Panc1 (cell line): ENCODE measurements at regions of chr2 and their contacts with region 1.

Region 1: GRCh38 chr2:44392338-44392943 is 30.7 kb downstream of the CAMKMT start:
- DNase-seq: peak; percentile 8
- ATAC-seq: no peak
- H3K4me3 ChIP-seq: no peak overlapping the region
- H3K27ac ChIP-seq: no peak overlapping the region
- H3K4me1 ChIP-seq: no peaks in the 10 kb centered on the region; the same call in 1 of the 2 replicates
- H3K27me3 ChIP-seq: no peaks in the 10 kb centered on the region
- CTCF ChIP-seq: peak; percentile 69; the same call in 1 of the 2 replicates

Region 2: GRCh38 chr2:44369392-44369791 is 23.0 kb before region 1 on chr2:
- CTCF ChIA-PET with region 1: interaction called, 16 read pairs
- POLR2A ChIA-PET with region 1: interaction called, 6 read pairs
- in situ Hi-C with region 1: no loop called
- intact Hi-C with region 1: no loop called
- DNase-seq: no peak
- ATAC-seq: no peak
- H3K4me3 ChIP-seq: no peak overlapping the region
- H3K27ac ChIP-seq: no peak overlapping the region
- H3K4me1 ChIP-seq: peaks cover 10% of the 10 kb centered on the region
- H3K27me3 ChIP-seq: no peaks in the 10 kb centered on the region
- CTCF ChIP-seq: no peak

Region 3: DNA sequence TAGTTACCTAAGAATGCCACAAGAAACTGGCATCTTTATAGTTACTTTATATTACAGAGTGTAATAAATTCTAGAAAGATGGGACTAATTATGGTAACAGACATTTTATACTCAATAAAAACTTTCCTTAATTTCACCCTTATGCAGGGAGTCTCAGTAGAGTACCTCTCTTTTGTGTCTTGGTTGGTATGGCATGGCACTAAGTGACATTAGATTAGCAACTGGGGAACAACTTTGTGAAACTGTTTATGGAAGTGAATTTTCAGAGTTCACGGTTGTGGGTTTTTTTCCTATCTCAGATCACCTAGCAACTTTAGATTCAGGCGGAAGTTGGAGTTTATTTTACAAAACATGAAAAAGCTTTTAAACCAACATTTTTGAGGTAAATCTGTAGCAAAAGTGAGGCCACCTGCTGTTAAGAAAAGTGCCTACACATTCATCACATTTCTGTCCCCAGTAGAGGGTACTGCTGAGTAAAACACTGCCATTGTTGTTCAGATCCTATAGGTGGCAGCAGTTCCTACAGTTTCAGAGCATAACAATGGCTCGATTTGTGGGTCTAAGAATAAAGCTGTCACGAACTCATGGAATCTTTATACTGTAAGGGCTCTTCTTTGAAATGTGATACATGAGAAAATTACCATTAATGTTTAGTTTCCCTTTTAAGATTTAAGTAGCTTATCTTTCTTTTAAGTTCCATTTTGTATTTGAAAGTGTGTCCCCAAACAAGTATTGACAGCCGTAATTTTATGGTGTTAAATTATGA is 86.9 kb after region 1 on chr2:
- CTCF ChIA-PET with region 1: interaction called, 15 read pairs
- POLR2A ChIA-PET with region 1: no interaction called
- in situ Hi-C with region 1: loop called (anchors 25 kb)
- intact Hi-C with region 1: loop called (anchors 5 kb)
- DNase-seq: peak; percentile 84
- ATAC-seq: peak; percentile 99
- H3K4me3 ChIP-seq: no peak overlapping the region
- H3K27ac ChIP-seq: no peak overlapping the region
- H3K4me1 ChIP-seq: no peaks in the 10 kb centered on the region
- H3K27me3 ChIP-seq: no peaks in the 10 kb centered on the region
- CTCF ChIP-seq: peak; percentile 96

Region 4: DNA sequence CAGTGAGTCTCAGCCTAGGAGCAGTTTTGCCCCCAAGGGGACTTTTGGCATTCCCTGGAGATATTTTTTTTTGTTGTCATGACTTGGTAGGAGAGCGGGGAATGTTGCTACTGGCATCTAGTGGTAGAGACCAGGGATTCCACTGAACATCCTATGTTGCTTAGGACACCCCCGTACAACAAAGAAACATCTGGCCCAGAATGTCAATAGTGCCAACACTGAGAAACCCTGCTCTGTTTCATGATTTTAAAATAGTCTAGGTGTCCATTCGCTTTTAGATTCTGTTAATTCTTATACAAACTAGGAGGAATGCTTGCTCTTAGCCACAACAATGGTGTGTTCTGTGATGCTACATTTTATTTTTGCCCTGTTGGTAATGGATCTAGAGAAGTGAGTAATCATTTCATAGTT is 323.2 kb after region 1 on chr2:
- CTCF ChIA-PET with region 1: interaction called, 3 read pairs
- POLR2A ChIA-PET with region 1: no interaction called
- in situ Hi-C with region 1: no loop called
- intact Hi-C with region 1: loop called (anchors 5 kb)
- DNase-seq: no peak
- ATAC-seq: peak; percentile 85
- H3K4me3 ChIP-seq: no peak overlapping the region
- H3K27ac ChIP-seq: no peak overlapping the region
- H3K4me1 ChIP-seq: no peaks in the 10 kb centered on the region
- H3K27me3 ChIP-seq: no peaks in the 10 kb centered on the region
- CTCF ChIP-seq: peak; percentile 81